ENCODE measurements at regions of chr16 and their contacts with region 1.

Region 1: GRCh38 chr16:7509963-7510601 is 177.4 kb downstream of the RBFOX1 start:
- DNase-seq: no peak

Region 2: GRCh38 chr16:7344830-7345780 is 165.0 kb before region 1 on chr16:
- intact Hi-C with region 1: loop called (anchors 10 kb)
- DNase-seq: no peak

Region 3: GRCh38 chr16:7602291-7602950 is 92.3 kb after region 1 on chr16:
- intact Hi-C with region 1: loop called (anchors 10 kb)
- DNase-seq: no peak